ENCODE measurements at regions of chr1 and their contacts with region 1.

Region 1: DNA sequence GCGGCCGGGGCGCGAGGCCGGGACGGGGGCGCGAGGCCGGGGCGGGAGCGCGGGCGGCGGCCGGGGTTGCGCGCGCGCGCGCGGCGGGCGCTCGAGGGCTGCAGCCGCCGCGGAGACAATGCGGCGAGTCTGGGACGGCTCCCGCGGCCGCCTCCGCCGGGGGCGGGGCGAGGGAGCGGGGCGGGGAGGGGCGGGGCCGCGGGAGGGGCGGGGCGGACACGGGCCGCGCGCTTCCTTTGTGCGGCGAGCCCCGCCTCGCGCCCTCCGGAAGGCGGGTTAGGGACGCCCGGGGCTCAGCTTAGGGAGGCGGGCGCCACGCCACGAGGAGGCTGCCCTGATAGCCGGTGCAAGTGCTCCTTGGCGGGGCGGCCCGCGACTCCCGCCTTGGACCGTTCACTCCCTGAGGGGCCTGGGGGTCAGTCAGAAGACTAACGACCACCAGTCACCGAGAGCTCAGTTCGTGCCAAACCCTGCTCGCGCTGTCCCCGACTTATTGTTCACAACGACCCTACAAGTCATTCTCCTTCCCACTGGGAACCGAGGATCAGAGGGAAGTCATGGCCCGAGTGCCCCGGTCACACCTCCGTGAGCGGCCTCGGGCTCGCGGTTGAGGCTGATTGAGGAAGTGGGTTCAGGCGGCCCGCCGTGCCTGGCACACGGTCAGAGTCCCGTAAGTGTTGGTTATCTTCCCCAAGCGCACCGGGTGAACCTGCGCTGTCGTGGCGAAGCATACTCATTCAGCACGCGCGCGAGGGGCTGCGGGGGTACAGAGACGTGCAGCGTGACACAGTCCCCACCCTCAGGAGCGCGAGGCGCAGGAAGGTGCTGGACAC is 29.1 kb upstream of the A3GALT2 start:
- DNase-seq: peak; percentile 72
- ATAC-seq: peak; percentile 82
- H3K4me3 ChIP-seq: peak overlapping the region; percentile 98
- H3K27ac ChIP-seq: peak overlapping the region; percentile 86
- H3K4me1 ChIP-seq: peaks cover 10% of the 10 kb centered on the region
- H3K27me3 ChIP-seq: no peaks in the 10 kb centered on the region
- CTCF ChIP-seq: no peak
- POLR2A ChIP-seq: peak; percentile 71; the same call in 1 of the 2 replicates
- RAD21 ChIP-seq: no peak

Region 2: GRCh38 chr1:32786856-32787255 is 563.1 kb before region 1 on chr1:
- CTCF ChIA-PET with region 1: no interaction called
- POLR2A ChIA-PET with region 1: no interaction called
- dilution Hi-C with region 1: no loop called
- in situ Hi-C with region 1: no loop called
- intact Hi-C with region 1: no loop called
- DNase-seq: no peak
- ATAC-seq: no peak
- H3K4me3 ChIP-seq: no peak overlapping the region
- H3K27ac ChIP-seq: no peak overlapping the region
- H3K4me1 ChIP-seq: peaks cover 4% of the 10 kb centered on the region; the same call in 1 of the 2 replicates
- H3K27me3 ChIP-seq: no peaks in the 10 kb centered on the region
- CTCF ChIP-seq: peak; percentile 33
- POLR2A ChIP-seq: no peak
- RAD21 ChIP-seq: no peak

Region 3: DNA sequence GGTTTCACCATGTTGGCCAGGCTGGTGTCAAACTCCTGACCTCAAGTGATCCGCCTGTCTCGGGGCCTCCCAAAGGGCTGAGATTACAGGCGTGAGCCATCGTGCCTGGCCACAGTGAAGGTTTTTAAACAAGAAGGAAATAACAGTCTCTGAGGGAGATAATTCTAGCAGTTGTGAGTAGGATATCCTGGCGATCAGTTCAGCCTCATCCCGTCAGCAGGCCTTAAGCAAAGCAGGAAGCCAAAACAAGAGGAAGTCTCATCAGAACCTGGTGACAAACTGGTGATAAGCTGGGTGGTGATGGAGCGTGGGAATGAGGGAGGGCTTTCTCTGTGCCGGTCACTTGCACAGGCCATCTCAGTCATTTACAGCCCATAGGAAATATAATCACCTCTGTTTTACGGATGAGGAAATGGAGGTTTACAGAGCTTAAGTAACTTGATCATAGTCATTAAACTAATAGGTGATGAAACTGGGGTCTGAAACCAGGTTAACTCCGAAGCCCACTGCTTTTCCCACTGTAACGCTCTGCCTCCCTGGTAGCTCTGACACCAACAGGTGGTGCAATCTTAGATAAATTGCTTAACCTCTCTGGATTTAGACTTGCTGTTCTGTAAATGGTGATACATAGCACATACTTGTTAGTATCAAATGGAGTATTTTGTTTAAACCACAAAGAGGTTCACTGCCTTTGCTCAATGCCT is 11.7 kb after region 1 on chr1:
- CTCF ChIA-PET with region 1: no interaction called
- POLR2A ChIA-PET with region 1: interaction called, 10 read pairs
- dilution Hi-C with region 1: no loop called
- in situ Hi-C with region 1: no loop called
- intact Hi-C with region 1: no loop called
- DNase-seq: no peak
- ATAC-seq: no peak
- H3K4me3 ChIP-seq: no peak overlapping the region
- H3K27ac ChIP-seq: no peak overlapping the region
- H3K4me1 ChIP-seq: peaks cover 26% of the 10 kb centered on the region
- H3K27me3 ChIP-seq: no peaks in the 10 kb centered on the region
- CTCF ChIP-seq: no peak
- POLR2A ChIP-seq: no peak
- RAD21 ChIP-seq: no peak

Region 4: GRCh38 chr1:33388805-33389771 is 39.1 kb after region 1 on chr1:
- CTCF ChIA-PET with region 1: no interaction called
- POLR2A ChIA-PET with region 1: interaction called, 15 read pairs
- dilution Hi-C with region 1: no loop called
- in situ Hi-C with region 1: no loop called
- intact Hi-C with region 1: no loop called
- DNase-seq: peak; percentile 58
- ATAC-seq: peak; percentile 44
- H3K4me3 ChIP-seq: no peak overlapping the region
- H3K27ac ChIP-seq: peak overlapping the region; percentile 84
- H3K4me1 ChIP-seq: peaks cover 64% of the 10 kb centered on the region
- H3K27me3 ChIP-seq: no peaks in the 10 kb centered on the region
- CTCF ChIP-seq: no peak
- POLR2A ChIP-seq: no peak
- RAD21 ChIP-seq: no peak

Region 5: GRCh38 chr1:33430692-33431593 is 80.9 kb after region 1 on chr1 and contains the start of gene PHC2:
- CTCF ChIA-PET with region 1: no interaction called
- POLR2A ChIA-PET with region 1: no interaction called
- dilution Hi-C with region 1: no loop called
- in situ Hi-C with region 1: no loop called
- intact Hi-C with region 1: loop called (anchors 1 kb)
- DNase-seq: peak; percentile 94
- ATAC-seq: peak; percentile 90
- H3K4me3 ChIP-seq: peak within 1 kb of the TSS; percentile 87
- H3K27ac ChIP-seq: peak within 1 kb of the TSS; percentile 54
- H3K4me1 ChIP-seq: peaks cover 13% of the 10 kb centered on the region
- H3K27me3 ChIP-seq: no peaks in the 10 kb centered on the region
- CTCF ChIP-seq: peak; percentile 45
- POLR2A ChIP-seq: no peak; the same call in 1 of the 2 replicates
- RAD21 ChIP-seq: no peak
- total RNA-seq, gene PHC2: 43.3 and 46.4 TPM in 2 replicates

Region 6: GRCh38 chr1:33735621-33736020 is 385.6 kb after region 1 on chr1:
- CTCF ChIA-PET with region 1: no interaction called
- POLR2A ChIA-PET with region 1: no interaction called
- dilution Hi-C with region 1: no loop called
- in situ Hi-C with region 1: no loop called
- intact Hi-C with region 1: no loop called
- DNase-seq: no peak
- ATAC-seq: no peak
- H3K4me3 ChIP-seq: no peak overlapping the region
- H3K27ac ChIP-seq: no peak overlapping the region
- H3K4me1 ChIP-seq: no peaks in the 10 kb centered on the region
- H3K27me3 ChIP-seq: no peaks in the 10 kb centered on the region
- CTCF ChIP-seq: 0 out of 2 replicates have a peak, but pooled peaks have one; percentile 20
- POLR2A ChIP-seq: no peak
- RAD21 ChIP-seq: no peak

Measured in IMR-90 (cell line).